Colonic mucosa (tissue), 4 donors: ENCODE measurements at regions of chr17 and their contacts with region 1.

Region 1: GRCh38 chr17:76681222-76682137 is 29.3 kb downstream of the MXRA7 start:
- DNase-seq: peak; percentile 89
- H3K4me3 ChIP-seq: no peak overlapping the region
- H3K27ac ChIP-seq: no peak overlapping the region
- H3K4me1 ChIP-seq: peaks cover 3% of the 10 kb centered on the region
- H3K27me3 ChIP-seq: no peaks in the 10 kb centered on the region
- CTCF ChIP-seq: peak; percentile 83

Region 2: GRCh38 chr17:76523084-76524037 is 158.1 kb before region 1 on chr17:
- intact Hi-C with region 1: loop called (anchors 10 kb)
- DNase-seq: peak; percentile 79
- H3K4me3 ChIP-seq: no peak overlapping the region
- H3K27ac ChIP-seq: no peak overlapping the region
- H3K4me1 ChIP-seq: peaks cover 14% of the 10 kb centered on the region
- H3K27me3 ChIP-seq: no peaks in the 10 kb centered on the region
- CTCF ChIP-seq: peak; percentile 99

Region 3: DNA sequence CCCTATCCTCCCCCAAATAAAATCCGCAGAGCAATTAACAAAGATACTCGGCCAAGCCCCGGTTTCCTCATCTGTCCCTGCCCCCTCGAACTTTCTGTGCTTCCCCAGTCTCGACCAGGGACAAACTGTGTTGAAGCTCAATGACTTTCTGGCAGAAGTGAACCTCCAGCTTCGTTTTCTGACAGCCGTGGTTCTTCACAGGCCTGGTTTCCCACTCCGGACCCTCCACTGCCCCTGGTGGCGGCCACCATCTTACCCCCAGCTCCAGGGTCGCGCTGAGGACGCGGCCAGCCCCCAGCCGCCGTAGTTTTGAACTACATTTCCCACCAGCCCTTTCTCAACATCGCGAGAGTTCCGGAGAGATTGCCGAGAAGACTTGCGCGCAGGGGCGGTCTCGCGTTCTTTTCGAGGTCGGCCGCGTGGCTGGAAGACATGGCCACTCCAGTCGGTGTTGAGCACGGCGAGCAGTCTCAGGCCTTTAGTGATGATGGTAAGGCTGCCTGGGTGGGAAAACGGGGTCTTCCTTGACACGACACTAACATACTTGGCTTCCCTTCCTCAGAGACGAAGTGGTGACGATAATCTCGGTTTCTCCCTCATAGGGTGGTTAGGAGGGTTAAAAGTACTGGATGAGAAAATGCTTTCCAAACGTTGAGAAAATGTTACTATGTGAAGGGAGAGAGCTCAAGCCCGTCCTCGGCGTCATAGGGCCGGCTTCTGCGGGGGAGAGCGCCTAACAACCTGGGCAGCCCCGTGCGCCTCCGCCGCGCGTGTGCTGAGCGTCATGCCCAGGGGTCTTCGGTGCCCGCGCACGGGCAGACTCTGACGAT is 123.9 kb before region 1 on chr17:
- intact Hi-C with region 1: loop called (anchors 10 kb)
- DNase-seq: peak; percentile 96
- H3K4me3 ChIP-seq: peak overlapping the region; percentile 83
- H3K27ac ChIP-seq: peak overlapping the region; percentile 81
- H3K4me1 ChIP-seq: peaks cover 6% of the 10 kb centered on the region
- H3K27me3 ChIP-seq: no peaks in the 10 kb centered on the region
- CTCF ChIP-seq: peak; percentile 31

Region 4: DNA sequence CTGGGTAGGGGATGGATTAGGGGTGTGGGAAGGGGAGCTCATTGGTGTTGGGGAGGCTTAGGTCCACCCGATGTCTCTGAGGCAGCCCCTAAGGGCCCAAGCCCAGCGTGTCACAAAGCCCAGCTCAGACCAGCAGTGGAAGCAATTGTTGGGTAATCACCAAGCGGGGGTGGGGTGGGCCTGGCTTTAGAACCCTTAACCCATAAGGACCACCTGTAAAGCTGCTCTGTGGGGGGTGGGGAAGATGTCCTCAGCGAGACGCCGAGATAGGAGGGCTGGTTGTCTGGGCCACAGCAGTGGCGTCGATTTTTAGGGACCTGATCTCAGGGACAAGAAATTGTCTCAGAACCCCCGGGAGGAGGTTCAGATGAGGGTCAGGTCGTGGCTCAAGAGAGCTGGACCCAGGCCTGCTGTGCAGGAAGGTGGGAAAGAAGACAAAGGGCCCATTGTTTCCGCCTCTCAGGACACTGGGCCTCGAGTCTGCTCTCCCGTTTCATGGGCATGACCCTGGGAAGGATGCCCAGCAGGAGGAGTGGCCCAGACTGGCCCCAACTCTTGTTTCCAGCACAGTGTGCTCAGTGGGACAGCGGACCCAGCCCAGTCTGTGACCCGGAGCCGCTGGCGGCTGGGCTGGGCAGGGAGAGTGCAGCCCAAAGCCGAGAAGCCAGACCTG is 111.7 kb before region 1 on chr17:
- intact Hi-C with region 1: no loop called
- DNase-seq: no peak
- H3K4me3 ChIP-seq: no peak overlapping the region
- H3K27ac ChIP-seq: no peak overlapping the region
- H3K4me1 ChIP-seq: no peaks in the 10 kb centered on the region
- H3K27me3 ChIP-seq: no peaks in the 10 kb centered on the region
- CTCF ChIP-seq: no peak

Region 5: DNA sequence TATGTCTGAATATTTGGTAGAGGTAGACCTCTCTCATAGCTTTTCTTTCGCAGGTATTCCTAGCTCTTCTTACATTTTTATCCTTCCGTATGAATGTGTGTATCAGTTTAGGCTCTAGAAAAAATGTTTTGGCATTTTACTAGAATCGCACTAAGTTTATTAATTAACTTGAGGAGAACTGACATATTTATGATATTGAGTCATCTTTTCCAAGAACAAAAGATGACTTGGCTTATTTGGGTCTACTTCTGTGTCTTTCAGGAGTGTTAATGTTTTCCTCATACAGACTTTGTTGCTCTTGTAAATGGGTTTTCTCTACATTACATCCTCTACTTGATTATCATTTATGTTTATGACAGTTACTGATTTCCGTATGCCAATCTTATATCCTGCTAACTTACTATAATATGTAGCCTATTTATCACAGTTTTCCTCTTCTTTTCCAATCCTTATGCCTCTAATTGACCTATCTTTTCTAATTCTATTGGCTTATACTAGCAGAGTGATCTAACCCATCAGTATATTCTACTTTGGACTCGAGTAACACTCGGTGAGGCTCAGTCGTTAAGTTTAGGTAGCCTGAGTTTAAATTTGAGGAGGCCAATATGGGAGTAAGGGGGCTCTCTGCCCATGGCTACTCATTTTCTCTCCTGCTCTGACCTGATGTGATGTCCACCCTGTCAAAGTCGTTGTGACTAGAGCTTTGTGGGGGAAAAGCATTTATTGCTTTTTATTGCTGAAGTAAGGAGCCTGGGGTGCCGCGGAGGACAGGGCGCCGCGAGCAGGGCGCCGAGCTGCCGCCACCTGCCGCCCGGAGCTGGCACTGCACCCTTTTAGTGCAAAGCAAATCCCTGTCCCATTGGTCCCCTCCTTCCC is 58.0 kb before region 1 on chr17:
- intact Hi-C with region 1: loop called (anchors 5 kb)
- DNase-seq: peak; percentile 82
- H3K4me3 ChIP-seq: no peak overlapping the region
- H3K27ac ChIP-seq: no peak overlapping the region
- H3K4me1 ChIP-seq: no peaks in the 10 kb centered on the region
- H3K27me3 ChIP-seq: no peaks in the 10 kb centered on the region
- CTCF ChIP-seq: peak; percentile 97